AG04450 (cell line): ENCODE measurements at regions of chr11 and their contacts with region 1.

Region 1: GRCh38 chr11:1882519-1883238 is 9.0 kb downstream of the PRR33 start:
- DNase-seq: peak; percentile 15
- H3K4me3 ChIP-seq: no peak overlapping the region
- H3K27ac ChIP-seq: no peak overlapping the region
- H3K27me3 ChIP-seq: peaks cover 13% of the 10 kb centered on the region
- CTCF ChIP-seq: peak; percentile 86

Region 2: DNA sequence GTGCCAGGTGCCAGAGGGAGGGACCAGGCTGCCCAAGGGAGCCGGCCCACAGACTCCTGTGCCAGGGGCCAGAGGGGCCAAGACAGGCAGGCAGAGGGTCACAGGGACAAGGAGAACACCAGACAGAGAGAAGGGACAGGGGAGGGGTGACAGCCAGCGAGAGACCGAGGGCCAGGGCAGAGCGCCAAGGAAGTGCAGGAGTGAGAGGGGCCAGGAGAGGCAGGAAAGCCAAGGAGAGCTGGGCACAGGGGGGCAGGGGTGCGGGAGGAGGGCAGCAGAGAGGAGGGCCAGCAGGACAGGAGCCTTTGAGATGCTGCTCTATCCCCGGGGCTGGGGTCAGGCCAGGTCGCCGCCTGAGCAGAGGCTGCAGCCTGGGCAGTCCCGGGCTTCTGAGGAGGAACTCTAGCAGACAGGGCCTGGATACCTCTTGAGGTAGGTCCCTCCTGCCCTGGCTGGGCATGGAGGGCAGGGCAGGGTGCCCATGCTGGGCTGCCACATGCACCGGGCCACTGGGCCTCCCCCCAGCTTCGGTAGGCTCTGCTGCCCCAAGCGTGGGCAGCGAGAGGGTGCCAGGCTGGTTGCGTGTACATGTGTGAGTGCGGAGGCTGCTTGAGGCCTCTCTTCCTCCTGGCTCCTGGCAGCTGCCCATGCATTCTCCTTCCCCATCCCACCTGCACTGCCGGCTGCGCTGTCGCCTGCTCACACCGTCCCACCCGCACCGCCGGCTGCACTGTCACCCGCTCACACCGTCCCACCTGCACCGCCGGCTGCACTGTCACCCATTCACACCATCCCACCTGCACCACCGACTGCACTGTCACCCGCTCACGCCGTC is 17.6 kb before region 1 on chr11:
- CTCF ChIA-PET with region 1: interaction called, 10 read pairs
- POLR2A ChIA-PET with region 1: no interaction called
- DNase-seq: no peak
- H3K4me3 ChIP-seq: no peak overlapping the region
- H3K27ac ChIP-seq: peak overlapping the region; percentile 11
- H3K27me3 ChIP-seq: peaks cover 10% of the 10 kb centered on the region
- CTCF ChIP-seq: no peak

Region 3: GRCh38 chr11:1908618-1909017 is 25.9 kb after region 1 on chr11:
- CTCF ChIA-PET with region 1: interaction called, 11 read pairs
- POLR2A ChIA-PET with region 1: no interaction called
- DNase-seq: no peak
- H3K4me3 ChIP-seq: no peak overlapping the region
- H3K27ac ChIP-seq: no peak overlapping the region
- H3K27me3 ChIP-seq: peaks cover 14% of the 10 kb centered on the region
- CTCF ChIP-seq: no peak

Region 4: GRCh38 chr11:1939006-1939625 is 56.4 kb after region 1 on chr11:
- CTCF ChIA-PET with region 1: no interaction called
- POLR2A ChIA-PET with region 1: no interaction called
- DNase-seq: no peak
- H3K4me3 ChIP-seq: no peak overlapping the region
- H3K27ac ChIP-seq: no peak overlapping the region
- H3K27me3 ChIP-seq: peaks cover 5% of the 10 kb centered on the region
- CTCF ChIP-seq: no peak

Region 5: DNA sequence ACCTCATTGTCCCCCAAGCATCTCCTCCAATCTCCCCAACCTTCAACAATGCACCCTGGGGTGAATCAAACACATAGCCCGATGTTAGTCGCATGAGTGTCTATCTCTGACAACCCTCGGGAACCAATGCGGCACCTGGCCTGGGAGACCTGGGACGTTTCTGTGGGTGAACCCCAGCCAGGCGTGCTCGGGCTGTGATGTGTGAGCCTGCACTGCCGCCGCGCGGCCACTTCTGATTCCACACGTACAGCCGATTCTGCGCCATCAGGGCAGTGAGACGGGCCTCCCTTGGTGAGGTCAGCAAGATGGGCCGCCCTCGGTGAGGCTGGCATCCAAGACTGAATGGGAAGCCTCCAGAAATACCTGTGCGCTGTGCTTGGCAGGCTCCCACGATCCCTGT is 120.1 kb after region 1 on chr11:
- CTCF ChIA-PET with region 1: interaction called, 24 read pairs
- POLR2A ChIA-PET with region 1: no interaction called
- DNase-seq: no peak
- H3K4me3 ChIP-seq: no peak overlapping the region
- H3K27ac ChIP-seq: no peak overlapping the region
- H3K27me3 ChIP-seq: no peaks in the 10 kb centered on the region
- CTCF ChIP-seq: no peak